OCI-LY7 (cell line): ENCODE measurements at regions of chr6 and their contacts with region 1.

Region 1: DNA sequence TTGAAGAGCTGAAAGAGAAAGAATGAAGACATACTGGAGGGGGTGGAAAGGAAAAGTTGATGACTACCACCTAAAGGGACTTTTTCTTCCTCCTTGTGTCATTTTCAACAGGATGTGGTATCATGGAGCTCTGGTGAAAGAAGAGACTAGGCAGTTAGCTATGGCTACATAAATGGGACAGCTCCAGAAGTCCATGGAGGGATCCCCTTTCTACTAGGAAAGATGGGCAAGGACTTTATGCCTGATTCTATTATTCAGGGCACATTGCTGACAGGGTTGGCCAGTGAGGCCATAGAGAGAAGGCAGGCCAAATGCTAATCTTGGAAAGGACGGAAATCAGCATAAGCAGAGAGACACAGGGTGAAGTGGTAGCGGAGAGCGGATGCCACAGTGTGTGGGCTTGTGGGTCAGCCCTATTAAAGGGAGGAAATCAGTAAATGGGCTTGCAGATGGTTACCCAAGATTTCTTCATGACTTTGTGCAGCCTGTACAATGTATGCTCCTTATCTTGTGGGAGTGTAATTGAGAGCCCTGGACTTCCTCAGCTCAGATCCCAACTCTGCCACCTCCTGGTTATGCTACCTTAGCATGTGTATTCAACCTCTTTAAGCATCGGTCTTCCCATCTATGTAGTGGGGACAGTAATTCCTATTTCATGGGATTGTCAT is 77.4 kb upstream of the TMEM170B start:
- DNase-seq: peak; percentile 56
- H3K4me3 ChIP-seq: peak overlapping the region; percentile 56
- H3K27ac ChIP-seq: peak overlapping the region; percentile 91
- H3K4me1 ChIP-seq: peaks cover 49% of the 10 kb centered on the region
- CTCF ChIP-seq: peak; percentile 68

Region 2: DNA sequence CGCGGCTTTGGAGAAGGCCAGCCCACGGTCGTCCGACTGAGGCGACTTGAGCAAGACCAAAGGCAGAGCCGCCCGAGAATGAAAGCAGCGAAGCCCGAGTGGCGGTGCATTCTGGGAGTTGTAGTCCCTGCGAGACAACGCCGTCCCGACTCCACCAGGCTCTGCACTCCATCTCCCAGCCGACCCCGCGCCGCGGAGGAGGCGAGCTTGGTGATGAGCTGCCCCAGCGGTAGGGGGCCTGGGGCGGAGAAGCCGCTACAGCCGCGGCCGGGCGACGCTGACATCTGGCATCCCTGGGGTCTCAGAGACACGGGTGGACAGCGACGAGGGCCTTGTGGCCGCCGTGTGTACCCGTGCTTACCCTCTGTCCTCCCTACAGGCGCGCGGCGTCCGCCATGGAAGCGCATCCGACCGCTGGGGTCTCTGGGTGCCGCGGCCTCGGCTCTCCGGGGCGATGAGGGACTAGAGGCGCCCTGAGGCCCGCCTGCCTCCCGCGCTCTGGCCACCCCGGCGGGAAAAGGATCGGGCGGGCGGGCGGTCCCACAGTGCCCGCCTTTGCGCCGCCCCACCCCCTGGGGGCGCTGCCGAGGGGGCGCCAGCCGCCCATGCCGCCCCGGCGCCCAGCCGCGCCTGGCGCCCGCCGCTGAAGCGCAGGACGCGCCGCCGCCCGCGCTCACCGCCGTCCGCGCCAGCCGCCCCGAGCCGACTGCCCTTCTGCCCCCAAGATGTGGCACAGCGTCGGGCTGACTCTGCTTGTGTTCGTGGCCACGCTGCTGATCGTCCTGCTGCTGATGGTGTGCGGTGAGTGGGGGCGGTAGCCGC is 366.3 kb before region 1 on chr6 and contains the start of gene SMIM13:
- CTCF ChIA-PET with region 1: interaction called, 3 read pairs
- POLR2A ChIA-PET with region 1: no interaction called
- intact Hi-C with region 1: loop called (anchors 2 kb)
- DNase-seq: peak; percentile 97
- H3K4me3 ChIP-seq: peak within 1 kb of the TSS; percentile 72
- H3K27ac ChIP-seq: peak within 1 kb of the TSS; percentile 70
- H3K4me1 ChIP-seq: peaks cover 31% of the 10 kb centered on the region
- CTCF ChIP-seq: peak; percentile 56
- total RNA-seq, gene SMIM13: 13.9 and 16.4 TPM in 2 replicates

Region 3: DNA sequence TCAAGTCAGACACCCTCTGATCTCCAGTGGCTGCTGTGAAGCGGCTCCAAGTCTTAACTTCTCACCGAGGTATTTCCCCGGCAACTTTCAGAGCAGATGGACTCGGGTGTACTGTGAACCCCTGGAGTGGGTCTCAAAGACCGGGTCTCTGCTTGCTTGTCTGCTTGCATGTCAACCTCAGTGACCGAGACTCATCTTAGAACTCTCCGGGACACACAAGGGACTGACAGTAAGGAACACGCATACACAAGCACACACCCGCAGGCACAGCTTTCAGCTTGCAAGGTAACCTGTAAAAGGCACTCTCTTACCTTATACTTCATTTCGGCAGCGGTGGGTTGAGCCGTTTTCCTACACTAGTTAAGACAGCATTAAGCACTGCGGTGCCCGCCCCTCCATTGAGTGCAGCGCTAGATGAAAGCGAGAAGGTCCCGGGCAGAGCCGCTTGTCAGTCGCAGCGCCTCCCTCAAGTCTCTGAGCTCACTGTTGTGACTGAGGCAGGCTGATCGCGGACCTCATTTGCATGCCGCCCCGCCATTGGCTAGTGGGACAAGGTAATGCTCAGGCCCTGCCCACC is 227.9 kb before region 1 on chr6 and contains the start of gene NEDD9:
- CTCF ChIA-PET with region 1: no interaction called
- POLR2A ChIA-PET with region 1: no interaction called
- intact Hi-C with region 1: loop called (anchors 2 kb)
- DNase-seq: peak; percentile 90
- H3K4me3 ChIP-seq: peak within 1 kb of the TSS; percentile 65
- H3K27ac ChIP-seq: no peak within 1 kb of the TSS
- H3K4me1 ChIP-seq: peaks cover 13% of the 10 kb centered on the region
- CTCF ChIP-seq: peak; percentile 48; the same call in 1 of the 2 replicates
- total RNA-seq, gene NEDD9: 7.4 and 13.0 TPM in 2 replicates

Region 4: DNA sequence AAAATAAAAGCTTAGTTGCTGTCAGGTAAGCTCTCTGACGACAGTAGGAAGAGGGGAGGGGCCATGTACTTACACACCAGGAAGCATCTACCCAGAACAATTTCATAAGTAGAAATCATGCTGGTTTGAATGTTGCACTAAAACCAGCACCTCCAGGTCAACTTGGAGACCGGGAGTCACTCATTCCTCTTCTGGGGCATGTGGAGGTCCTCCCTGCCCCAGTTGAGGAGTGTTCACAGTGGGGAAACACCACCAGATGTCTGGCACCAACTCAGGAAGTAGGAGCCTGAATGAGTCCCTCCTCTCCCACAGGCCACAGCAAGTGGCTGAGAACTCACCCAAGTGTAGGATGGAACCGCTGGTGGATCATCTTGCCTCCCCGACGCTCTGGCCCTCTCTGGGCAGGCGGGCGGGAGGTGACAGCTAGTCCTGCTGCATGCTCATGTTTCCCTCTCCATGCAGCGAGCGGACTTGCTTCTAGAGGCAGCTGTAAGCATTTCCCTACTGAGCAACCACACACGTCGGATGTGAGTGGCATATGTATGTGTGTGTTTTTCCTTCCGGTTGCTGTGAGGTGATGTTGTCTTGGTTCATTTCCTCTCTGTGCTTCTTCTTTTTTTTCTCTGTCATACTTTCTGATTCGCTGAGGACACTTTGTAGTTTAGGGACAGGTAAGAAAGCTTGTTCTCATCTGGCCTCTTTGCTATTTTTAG is 78.2 kb before region 1 on chr6:
- CTCF ChIA-PET with region 1: interaction called, 6 read pairs
- POLR2A ChIA-PET with region 1: interaction called, 28 read pairs
- intact Hi-C with region 1: loop called (anchors 1 kb)
- DNase-seq: peak; percentile 83
- H3K4me3 ChIP-seq: peak overlapping the region; percentile 72
- H3K27ac ChIP-seq: peak overlapping the region; percentile 76
- H3K4me1 ChIP-seq: peaks cover 43% of the 10 kb centered on the region
- CTCF ChIP-seq: no peak

Region 5: GRCh38 chr6:11496152-11497060 is 36.3 kb after region 1 on chr6:
- CTCF ChIA-PET with region 1: interaction called, 12 read pairs
- POLR2A ChIA-PET with region 1: interaction called, 6 read pairs
- intact Hi-C with region 1: loop called (anchors 2 kb)
- DNase-seq: peak; percentile 84
- H3K4me3 ChIP-seq: no peak overlapping the region
- H3K27ac ChIP-seq: no peak overlapping the region
- H3K4me1 ChIP-seq: peaks cover 28% of the 10 kb centered on the region
- CTCF ChIP-seq: peak; percentile 100